ENCODE measurements at regions of chr1 and their contacts with region 1.

Region 1: DNA sequence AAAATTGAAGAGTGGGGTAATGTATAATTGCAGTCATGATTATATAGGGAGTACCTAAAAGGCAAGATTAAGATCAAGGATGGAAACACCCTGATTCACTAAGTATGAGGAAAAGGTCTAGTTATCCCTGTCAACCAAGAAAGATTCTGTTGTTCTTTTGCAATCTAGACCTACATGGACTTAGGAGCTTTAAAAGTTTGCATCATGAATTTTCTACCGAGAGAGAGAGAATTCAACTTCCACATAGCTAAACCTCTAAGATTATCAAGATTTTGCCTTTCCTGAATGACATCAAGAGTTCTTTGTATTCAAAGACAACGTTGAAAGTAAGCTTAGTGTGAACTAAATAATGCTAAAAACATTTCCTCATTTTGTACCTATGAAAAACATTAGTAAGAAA is 78.8 kb upstream of the RBM34 start:
- DNase-seq: no peak
- ATAC-seq: no peak
- H3K4me3 ChIP-seq: no peak overlapping the region
- H3K27ac ChIP-seq: no peak overlapping the region
- H3K4me1 ChIP-seq: no peaks in the 10 kb centered on the region
- H3K27me3 ChIP-seq: no peaks in the 10 kb centered on the region
- CTCF ChIP-seq: no peak

Region 2: DNA sequence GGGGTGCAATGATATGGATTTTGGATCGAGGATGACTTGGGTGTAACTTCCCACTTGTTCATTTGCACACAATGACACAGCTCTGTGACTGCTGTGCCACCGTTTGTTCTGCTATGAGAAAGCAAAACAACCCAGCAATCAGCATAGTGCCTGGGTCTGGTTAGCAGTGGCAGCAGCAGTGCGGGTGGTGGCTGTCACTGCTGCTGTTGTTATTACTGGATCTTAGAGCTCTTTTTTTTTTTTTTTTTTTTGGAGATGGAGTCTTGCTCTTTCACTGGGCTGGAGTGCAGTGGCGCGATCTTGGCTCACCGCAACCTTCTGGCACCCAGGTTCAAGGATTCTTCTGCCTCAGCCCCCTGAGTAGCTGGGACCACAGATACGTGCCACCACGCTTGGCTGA is 184.2 kb after region 1 on chr1:
- CTCF ChIA-PET with region 1: no interaction called
- POLR2A ChIA-PET with region 1: interaction called, 10 read pairs
- in situ Hi-C with region 1: no loop called
- intact Hi-C with region 1: no loop called
- DNase-seq: no peak
- ATAC-seq: no peak
- H3K4me3 ChIP-seq: no peak overlapping the region
- H3K27ac ChIP-seq: no peak overlapping the region
- H3K4me1 ChIP-seq: peaks cover 3% of the 10 kb centered on the region; the same call in 1 of the 2 replicates
- H3K27me3 ChIP-seq: no peaks in the 10 kb centered on the region
- CTCF ChIP-seq: no peak

Measured in Panc1 (cell line).